GM12878 (cell line): ENCODE measurements at regions of chr12 and their contacts with region 1.

Region 1: GRCh38 chr12:100229058-100229637 is 28.5 kb downstream of the ACTR6 start:
- DNase-seq: peak; percentile 1
- ATAC-seq: peak; percentile 57
- H3K4me3 ChIP-seq: no peak overlapping the region
- H3K27ac ChIP-seq: no peak overlapping the region
- H3K4me1 ChIP-seq: no peaks in the 10 kb centered on the region
- H3K27me3 ChIP-seq: no peaks in the 10 kb centered on the region
- CTCF ChIP-seq: peak in 2 of 3 experiments; percentile 19 to 20; a peak in 2 of 6 replicates
- EP300 ChIP-seq: no peak
- POLR2A ChIP-seq: no peak
- RAD21 ChIP-seq: peak; percentile 23; the same call in 1 of the 2 replicates

Region 2: DNA sequence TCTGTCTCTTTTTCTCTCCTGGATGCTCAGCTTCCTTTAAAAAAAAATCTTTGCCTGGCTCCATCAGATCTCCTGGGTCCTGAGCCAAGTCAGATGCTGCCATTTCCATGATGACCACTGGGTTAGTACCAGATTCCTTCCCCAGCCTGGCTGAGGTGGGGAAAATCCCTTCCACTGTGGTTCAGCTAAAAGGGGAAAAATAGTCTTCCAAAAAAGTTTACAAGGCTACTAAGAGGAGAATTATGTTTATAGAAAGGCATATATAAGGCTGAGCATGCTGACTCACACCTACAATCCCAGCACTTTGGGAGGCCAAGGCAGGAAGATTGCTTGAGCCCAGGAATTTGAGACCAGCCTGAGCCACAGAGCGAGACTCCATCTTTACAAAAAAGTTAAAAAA is 315.9 kb after region 1 on chr12:
- CTCF ChIA-PET with region 1: no interaction called
- POLR2A ChIA-PET with region 1: no interaction called
- RAD21 ChIA-PET with region 1: no interaction called
- SMC1A ChIA-PET with region 1: no interaction called
- in situ Hi-C with region 1: loop called (anchors 5 kb)
- intact Hi-C with region 1: no loop called
- DNase-seq: no peak
- ATAC-seq: no peak
- H3K4me3 ChIP-seq: no peak overlapping the region
- H3K27ac ChIP-seq: no peak overlapping the region
- H3K4me1 ChIP-seq: no peaks in the 10 kb centered on the region
- H3K27me3 ChIP-seq: no peaks in the 10 kb centered on the region; a peak in 1 of 4 replicates
- CTCF ChIP-seq: no peak
- EP300 ChIP-seq: no peak
- POLR2A ChIP-seq: no peak
- RAD21 ChIP-seq: no peak